Dendritic cell treated with granulocyte-macrophage colony-stimulating factor and Interleukin-4, amounts not matched to agents 40 ng/mL and 50 ng/mL, for 4 days (primary cell): ENCODE measurements at regions of chr16 and their contacts with region 1.

Region 1: DNA sequence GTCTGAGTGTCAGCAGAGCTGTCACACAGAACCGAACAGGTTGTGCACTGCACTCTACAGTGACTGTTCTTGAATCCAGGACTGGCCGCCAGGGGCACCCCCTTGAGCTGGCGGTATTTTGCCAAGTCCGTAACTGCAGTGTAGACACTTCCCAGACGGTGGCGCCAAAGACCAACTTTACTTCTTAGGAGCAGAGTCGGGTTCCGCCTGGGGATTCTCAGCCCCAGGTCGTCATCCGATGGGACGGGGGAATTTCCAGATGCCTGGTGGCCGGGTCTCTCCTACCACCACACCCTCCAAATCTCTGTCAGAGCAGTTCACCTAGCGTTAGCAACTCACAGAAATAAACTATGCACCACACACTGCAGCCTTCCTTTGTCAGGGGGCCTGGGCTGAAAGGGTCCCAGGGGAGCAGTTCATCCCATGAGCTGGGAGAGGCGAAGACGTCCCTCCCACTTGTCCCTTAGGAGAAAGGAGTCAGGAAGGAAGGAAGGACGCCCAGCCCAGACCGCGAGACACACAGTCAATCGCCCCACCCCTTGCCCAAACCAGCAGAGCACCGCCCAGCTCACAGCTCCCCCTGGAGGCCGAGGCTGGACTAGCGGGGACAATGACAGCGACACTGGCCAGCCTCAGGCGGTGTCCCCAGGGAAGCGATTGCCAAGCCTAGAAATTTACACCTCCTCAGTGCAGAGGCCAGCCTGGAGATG is 7.4 kb upstream of the RIPOR1 start:
- H3K4me3 Mint-ChIP-seq: peak overlapping the region; percentile 84
- H3K27ac Mint-ChIP-seq: peak overlapping the region; percentile 99
- H3K4me1 Mint-ChIP-seq: peaks cover 68% of the 10 kb centered on the region
- H3K27me3 Mint-ChIP-seq: peaks cover 27% of the 10 kb centered on the region

Region 2: DNA sequence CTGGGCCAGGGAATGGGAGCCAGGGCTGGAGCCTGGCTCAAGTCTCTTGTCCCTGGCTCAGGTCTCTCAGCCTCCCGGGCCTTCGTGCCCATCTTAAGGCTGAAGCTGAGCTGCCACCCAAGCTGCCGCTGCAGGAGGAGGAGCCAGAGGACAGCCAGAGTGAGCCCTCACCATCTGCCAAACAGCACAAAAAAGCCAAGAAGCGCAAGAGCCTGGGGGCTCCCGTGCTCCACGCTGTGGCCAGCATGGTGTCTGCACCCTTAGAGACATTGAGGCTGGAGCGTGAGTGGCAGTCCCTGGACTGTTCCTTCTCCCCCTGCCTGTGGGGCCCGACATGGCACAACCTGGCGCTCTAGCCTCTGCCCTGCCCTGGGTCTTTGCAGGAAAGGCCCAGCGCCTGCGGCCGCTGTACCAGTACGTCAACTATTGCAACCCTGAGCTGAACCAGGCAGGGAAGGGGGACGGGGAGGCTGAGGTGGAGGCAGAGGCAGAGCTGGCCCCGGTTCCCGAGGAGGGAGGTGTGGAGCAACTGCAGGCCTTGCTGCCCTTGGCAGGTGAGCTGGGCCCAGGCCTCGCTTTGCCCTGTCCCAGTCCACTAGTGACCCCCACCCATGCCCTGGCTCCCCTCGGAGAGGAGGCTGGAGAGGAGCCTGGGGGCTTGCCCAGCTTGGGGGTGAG is 146.7 kb after region 1 on chr16:
- intact Hi-C with region 1: loop called (anchors 1 kb)
- H3K4me3 Mint-ChIP-seq: peak overlapping the region; percentile 90
- H3K27ac Mint-ChIP-seq: peak overlapping the region; percentile 96
- H3K4me1 Mint-ChIP-seq: peaks cover 57% of the 10 kb centered on the region
- H3K27me3 Mint-ChIP-seq: no peaks in the 10 kb centered on the region